ENCODE measurements at regions of chr11 and their contacts with region 1.

Region 1: DNA sequence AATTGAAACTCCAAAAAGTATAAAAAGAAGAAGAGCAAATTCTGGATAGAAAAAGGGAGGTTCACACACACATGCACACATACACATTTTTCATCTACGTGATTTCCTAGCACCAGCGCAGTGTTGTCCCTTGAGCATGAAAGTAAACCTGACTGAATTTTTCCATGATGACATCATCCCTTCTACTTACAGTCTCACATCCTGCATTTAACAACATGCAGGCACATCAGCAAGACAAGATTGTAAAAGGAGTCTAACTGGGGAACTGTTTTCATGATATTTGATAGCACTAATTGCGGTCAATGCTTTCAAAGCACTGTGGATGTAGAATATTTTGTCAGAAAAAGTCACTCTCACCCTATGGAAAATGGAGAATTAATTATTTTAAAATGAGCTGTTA is 36.6 kb downstream of the GAS2 start:
- DNase-seq: peak; percentile 44 to 61
- H3K4me3 ChIP-seq: no peak overlapping the region
- H3K4me3 Mint-ChIP-seq: peak overlapping the region; percentile 52
- H3K27ac Mint-ChIP-seq: peak overlapping the region; percentile 83
- H3K4me1 ChIP-seq: peaks cover 30% of the 10 kb centered on the region
- H3K4me1 Mint-ChIP-seq: peaks cover 47% of the 10 kb centered on the region
- H3K27me3 ChIP-seq: no peaks in the 10 kb centered on the region
- H3K27me3 Mint-ChIP-seq: no peaks in the 10 kb centered on the region
- CTCF ChIP-seq: no peak

Region 2: GRCh38 chr11:22657101-22657694 is 45.8 kb before region 1 on chr11:
- CTCF ChIA-PET with region 1: no interaction called
- POLR2A ChIA-PET with region 1: no interaction called
- intact Hi-C with region 1: no loop called
- DNase-seq: no peak
- H3K4me3 ChIP-seq: no peak overlapping the region
- H3K4me3 Mint-ChIP-seq: no peak overlapping the region
- H3K27ac Mint-ChIP-seq: no peak overlapping the region
- H3K4me1 ChIP-seq: no peaks in the 10 kb centered on the region
- H3K4me1 Mint-ChIP-seq: no peaks in the 10 kb centered on the region
- H3K27me3 ChIP-seq: no peaks in the 10 kb centered on the region
- H3K27me3 Mint-ChIP-seq: no peaks in the 10 kb centered on the region
- CTCF ChIP-seq: no peak

Region 3: DNA sequence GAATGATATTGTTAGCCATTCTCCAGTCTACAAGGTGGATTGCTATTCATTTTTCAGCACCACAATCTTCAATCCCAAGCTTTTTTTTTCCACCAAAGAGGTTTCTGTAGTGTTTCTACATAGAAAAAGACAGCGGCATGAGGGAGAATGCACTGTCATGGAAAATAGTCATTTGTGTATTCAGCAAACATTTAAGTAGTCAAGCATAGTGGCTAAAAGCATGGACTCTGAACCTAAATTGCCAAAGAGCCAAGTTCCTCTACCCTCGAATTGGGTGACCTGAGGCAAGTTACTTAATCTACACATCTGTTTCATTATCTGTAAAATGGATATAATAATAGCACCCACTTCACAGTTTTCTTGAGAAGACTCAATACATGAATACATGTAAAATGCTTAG is 22.4 kb before region 1 on chr11:
- CTCF ChIA-PET with region 1: no interaction called
- POLR2A ChIA-PET with region 1: no interaction called
- intact Hi-C with region 1: loop called (anchors 1 kb)
- DNase-seq: peak; percentile 38 to 55
- H3K4me3 ChIP-seq: no peak overlapping the region
- H3K4me3 Mint-ChIP-seq: peak overlapping the region; percentile 42
- H3K27ac Mint-ChIP-seq: peak overlapping the region; percentile 58
- H3K4me1 ChIP-seq: peaks cover 54% of the 10 kb centered on the region
- H3K4me1 Mint-ChIP-seq: peaks cover 27% of the 10 kb centered on the region
- H3K27me3 ChIP-seq: no peaks in the 10 kb centered on the region
- H3K27me3 Mint-ChIP-seq: no peaks in the 10 kb centered on the region
- CTCF ChIP-seq: no peak

Measured in Caco-2 (cell line).